Sigmoid colon (tissue), 7 donors: ENCODE measurements at regions of chr4 and their contacts with region 1.

Region 1: GRCh38 chr4:169270810-169271691 is at the start of gene SH3RF1:
- DNase-seq: peak; percentile 95
- H3K4me3 ChIP-seq: peak within 1 kb of the TSS; percentile 70 to 96 (median 78)
- H3K27ac ChIP-seq: peak within 1 kb of the TSS; percentile 88 to 93 (median 90)
- H3K4me1 ChIP-seq: peaks cover 0 to 36% (median 23%) of the 10 kb centered on the region in 4 donors
- H3K27me3 ChIP-seq: no peaks in the 10 kb centered on the region
- CTCF ChIP-seq: no peak
- EP300 ChIP-seq: no peak
- POLR2A ChIP-seq: peak; percentile 50 to 74
- total RNA-seq, gene SH3RF1: 8.2 to 12.5 (median 9.8) TPM

Region 2: GRCh38 chr4:168923526-168924194 is 347.4 kb before region 1 on chr4:
- intact Hi-C with region 1: loop called (anchors 5 kb)
- DNase-seq: no peak
- H3K4me3 ChIP-seq: no peak overlapping the region
- H3K27ac ChIP-seq: peak overlapping the region; percentile 34 to 50 (median 46)
- H3K4me1 ChIP-seq: peaks cover 0 to 30% (median 26%) of the 10 kb centered on the region in 4 donors
- H3K27me3 ChIP-seq: no peaks in the 10 kb centered on the region
- CTCF ChIP-seq: peak; percentile 64 to 74 (median 67)
- EP300 ChIP-seq: no peak
- POLR2A ChIP-seq: no peak

Region 3: DNA sequence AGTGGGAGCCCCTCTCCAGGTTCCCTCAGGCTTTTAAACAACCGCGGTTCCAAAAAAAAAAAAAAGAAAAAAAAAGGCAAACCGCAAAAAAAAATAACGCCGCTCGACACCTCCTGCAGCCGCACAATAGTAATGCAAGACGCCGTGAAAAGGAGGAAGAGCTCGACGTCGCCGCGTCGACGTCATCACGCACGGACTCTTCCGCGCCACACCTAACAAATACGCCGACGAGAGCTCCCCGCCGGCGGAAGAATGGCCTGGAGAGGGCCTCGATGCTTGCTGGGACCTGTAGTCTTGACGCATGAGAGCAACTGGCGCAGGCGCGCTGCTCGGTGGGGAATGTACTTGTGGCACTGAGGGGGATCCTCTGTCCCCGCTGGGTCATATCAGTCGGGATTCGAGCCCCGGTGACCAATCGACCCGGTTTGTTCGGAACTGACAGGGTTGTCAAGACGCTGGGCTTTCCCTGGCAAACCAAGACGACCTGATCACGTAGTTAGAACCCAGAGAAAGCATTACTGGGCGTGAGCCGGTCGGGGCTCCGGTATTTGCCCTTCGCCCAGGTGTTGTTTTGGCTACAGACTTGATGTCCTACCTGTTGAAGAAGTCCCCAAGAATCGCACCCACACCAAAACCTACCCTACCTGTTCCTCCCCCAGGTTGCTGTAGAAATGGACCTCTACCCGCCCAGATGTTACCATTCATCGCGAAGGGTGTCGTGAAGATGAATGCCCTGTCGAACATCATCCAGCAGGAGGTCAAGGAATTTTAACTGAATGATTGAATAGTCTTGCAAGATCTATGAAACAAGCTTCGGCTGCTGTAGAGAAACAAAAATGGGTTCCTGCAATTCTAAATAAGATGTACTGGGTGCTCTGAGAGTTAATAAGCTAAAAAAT is 260.7 kb before region 1 on chr4 and contains the start of gene CBR4:
- intact Hi-C with region 1: loop called (anchors 2 kb)
- DNase-seq: peak; percentile 99
- H3K4me3 ChIP-seq: peak within 1 kb of the TSS; percentile 64 to 72 (median 69)
- H3K27ac ChIP-seq: peak within 1 kb of the TSS; percentile 92 to 96 (median 93)
- H3K4me1 ChIP-seq: peaks cover 0 to 31% (median 18%) of the 10 kb centered on the region in 4 donors
- H3K27me3 ChIP-seq: no peaks in the 10 kb centered on the region
- CTCF ChIP-seq: peak; percentile 8 to 52 (median 17)
- EP300 ChIP-seq: peak in 1 of 4 donors; percentile 22
- POLR2A ChIP-seq: peak; percentile 78 to 81
- total RNA-seq, gene CBR4: 13.4 to 23.9 (median 20.6) TPM

Region 4: DNA sequence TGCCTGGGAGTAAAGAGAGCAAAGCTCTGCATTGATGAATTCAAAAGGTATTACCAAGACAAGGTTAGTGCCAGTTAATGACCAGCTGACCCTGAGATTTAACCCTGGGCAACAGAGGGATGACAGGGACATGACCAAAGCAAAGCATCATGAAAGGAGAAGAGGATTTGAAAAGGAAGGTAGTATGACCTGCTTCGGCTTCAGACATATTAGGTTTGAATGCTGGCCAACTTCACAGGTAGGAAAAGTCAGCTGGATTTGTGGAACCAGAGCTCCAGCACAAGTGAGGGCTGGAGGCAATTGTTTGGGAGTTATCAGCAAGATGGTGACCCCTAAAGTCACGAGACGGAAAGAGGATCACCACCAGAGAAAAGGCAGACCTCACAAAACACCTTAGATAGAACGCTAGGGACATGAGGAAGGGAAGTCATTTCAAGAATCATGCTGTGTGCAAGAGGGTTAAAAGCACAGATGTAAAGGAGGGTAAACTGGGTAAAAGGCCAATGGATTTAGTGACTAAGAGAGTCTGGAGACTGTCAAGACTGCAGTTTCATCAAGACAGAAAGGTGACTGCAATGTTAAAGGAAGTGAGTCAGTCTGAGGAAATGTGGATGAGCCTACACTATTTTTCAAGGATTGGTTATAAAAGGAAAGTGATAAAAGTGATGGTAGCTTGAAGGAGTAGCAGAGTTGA is 45.8 kb before region 1 on chr4:
- intact Hi-C with region 1: loop called (anchors 5 kb)
- DNase-seq: no peak
- H3K4me3 ChIP-seq: no peak overlapping the region
- H3K27ac ChIP-seq: peak overlapping the region in 2 of 4 donors; percentile 26 to 58
- H3K4me1 ChIP-seq: peaks cover 0 to 50% (median 32%) of the 10 kb centered on the region in 4 donors
- H3K27me3 ChIP-seq: no peaks in the 10 kb centered on the region
- CTCF ChIP-seq: no peak
- EP300 ChIP-seq: peak in 1 of 4 donors; percentile 25
- POLR2A ChIP-seq: no peak

Region 5: GRCh38 chr4:169443748-169444147 is 172.7 kb after region 1 on chr4:
- intact Hi-C with region 1: no loop called
- DNase-seq: no peak
- H3K4me3 ChIP-seq: no peak overlapping the region
- H3K27ac ChIP-seq: no peak overlapping the region
- H3K4me1 ChIP-seq: peaks cover 0 to 19% (median 4%) of the 10 kb centered on the region in 4 donors
- H3K27me3 ChIP-seq: no peaks in the 10 kb centered on the region
- CTCF ChIP-seq: no peak
- EP300 ChIP-seq: no peak
- POLR2A ChIP-seq: no peak

Region 6: GRCh38 chr4:169485791-169486742 is 215.0 kb after region 1 on chr4:
- intact Hi-C with region 1: loop called (anchors 10 kb)
- DNase-seq: no peak
- H3K4me3 ChIP-seq: no peak overlapping the region
- H3K27ac ChIP-seq: no peak overlapping the region
- H3K4me1 ChIP-seq: no peaks in the 10 kb centered on the region
- H3K27me3 ChIP-seq: no peaks in the 10 kb centered on the region
- CTCF ChIP-seq: peak in 3 of 4 experiments; percentile 5 to 42 (median 19)
- EP300 ChIP-seq: no peak
- POLR2A ChIP-seq: no peak